Lower leg skin (tissue), 4 donors: ENCODE measurements at regions of chr3 and their contacts with region 1.

Region 1: DNA sequence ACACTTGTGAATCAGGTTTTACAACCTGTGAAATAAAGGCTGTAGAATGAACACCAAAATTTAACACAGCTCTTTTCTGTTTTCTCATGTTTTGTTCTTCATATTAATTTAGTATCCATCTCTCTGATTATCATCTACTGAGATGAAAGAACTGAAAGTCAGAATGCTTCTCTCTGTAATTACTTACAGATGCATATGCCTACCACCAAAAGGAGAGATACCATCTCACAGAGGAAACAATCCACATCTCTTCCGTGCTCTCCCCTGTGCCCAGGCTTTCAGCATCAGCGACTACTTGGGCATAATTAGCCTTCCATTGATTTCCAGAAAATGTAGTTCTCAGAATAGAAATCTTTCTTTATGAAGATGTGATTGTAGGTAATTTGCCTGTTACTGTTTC is 741.4 kb downstream of the GRM7 start:
- DNase-seq: no peak
- H3K4me3 ChIP-seq: no peak overlapping the region
- CTCF ChIP-seq: no peak
- POLR2A ChIP-seq: no peak

Region 2: GRCh38 chr3:7646851-7647250 is 44.6 kb after region 1 on chr3:
- intact Hi-C with region 1: loop called (anchors 1 kb)
- DNase-seq: no peak
- H3K4me3 ChIP-seq: no peak overlapping the region
- CTCF ChIP-seq: no peak
- POLR2A ChIP-seq: no peak

Region 3: GRCh38 chr3:7854266-7854665 is 252.0 kb after region 1 on chr3:
- intact Hi-C with region 1: no loop called
- DNase-seq: no peak
- H3K4me3 ChIP-seq: no peak overlapping the region
- CTCF ChIP-seq: no peak
- POLR2A ChIP-seq: no peak

Region 4: GRCh38 chr3:8899986-8900385 is 1297.7 kb after region 1 on chr3:
- intact Hi-C with region 1: no loop called
- DNase-seq: no peak
- H3K4me3 ChIP-seq: no peak overlapping the region
- CTCF ChIP-seq: no peak
- POLR2A ChIP-seq: no peak